Right lobe of liver (tissue), 6 donors: ENCODE measurements at regions of chr19 and their contacts with region 1.

Region 1: GRCh38 chr19:4400135-4400936 is at the start of gene SH3GL1:
- DNase-seq: peak; percentile 92 to 94 (median 94)
- ATAC-seq: peak; percentile 68 to 77 (median 72)
- H3K4me3 ChIP-seq: peak within 1 kb of the TSS; percentile 93 to 100 (median 99)
- H3K27ac ChIP-seq: peak within 1 kb of the TSS; percentile 88 to 97 (median 97)
- H3K4me1 ChIP-seq: peaks cover 0 to 36% (median 13%) of the 10 kb centered on the region in 4 donors
- H3K27me3 ChIP-seq: no peaks in the 10 kb centered on the region
- CTCF ChIP-seq: peak; percentile 92 to 99 (median 96)
- POLR2A ChIP-seq: peak; percentile 94
- total RNA-seq, gene SH3GL1: 22.6 to 47.7 (median 25.2) TPM

Region 2: GRCh38 chr19:4338441-4339001 is 61.8 kb before region 1 on chr19 and contains the start of gene STAP2:
- intact Hi-C with region 1: loop called in 1 of 2 experiments (anchors 10 kb)
- DNase-seq: peak; percentile 77 to 84 (median 78)
- ATAC-seq: peak; percentile 26 to 46 (median 31)
- H3K4me3 ChIP-seq: peak within 1 kb of the TSS; percentile 51 to 67 (median 65)
- H3K27ac ChIP-seq: peak within 1 kb of the TSS; percentile 76 to 94 (median 79)
- H3K4me1 ChIP-seq: peaks cover 0 to 45% (median 15%) of the 10 kb centered on the region in 4 donors
- H3K27me3 ChIP-seq: no peaks in the 10 kb centered on the region
- CTCF ChIP-seq: no peak
- POLR2A ChIP-seq: no peak
- total RNA-seq, gene STAP2: 21.4 to 51.5 (median 43.0) TPM

Region 3: DNA sequence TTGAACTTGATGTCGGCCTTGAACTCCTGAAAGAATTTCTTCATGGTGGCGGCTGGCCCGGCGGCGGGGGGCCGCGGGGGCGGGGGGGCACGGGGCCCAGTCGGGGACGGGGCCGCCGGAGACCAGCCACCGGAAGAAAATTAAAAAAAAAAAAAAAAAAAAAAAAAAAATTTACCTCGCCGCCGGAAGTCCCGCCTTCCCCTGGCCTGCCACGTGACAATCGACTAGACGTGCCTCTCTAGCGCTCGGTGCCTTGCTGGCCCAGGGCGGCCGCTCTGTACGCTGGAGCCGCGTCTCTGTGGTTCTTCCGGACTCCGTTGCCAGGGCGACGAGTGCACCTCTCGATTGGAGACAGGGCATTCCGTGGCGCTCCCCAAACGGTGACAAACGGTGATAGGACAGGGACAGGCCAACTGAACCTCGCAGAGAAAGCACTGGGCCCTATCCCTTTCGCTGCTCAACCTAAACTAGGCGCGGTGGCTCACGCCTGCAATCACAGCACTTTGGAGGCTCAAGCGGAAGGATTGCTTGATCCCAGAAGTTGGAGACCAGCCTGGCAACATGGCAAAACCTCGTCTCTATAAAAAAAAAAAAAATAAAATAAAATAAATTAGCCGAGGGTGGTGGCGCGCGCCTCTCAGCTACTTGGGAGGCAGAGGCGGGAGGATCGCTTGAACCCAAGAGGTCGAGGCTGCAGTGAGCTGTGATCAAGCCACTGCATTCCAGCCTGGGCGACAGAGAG is 57.5 kb after region 1 on chr19 and contains the start of gene UBXN6:
- intact Hi-C with region 1: loop called in 1 of 2 experiments (anchors 10 kb)
- DNase-seq: peak; percentile 98 to 99 (median 99)
- ATAC-seq: peak; percentile 94 to 97 (median 94)
- H3K4me3 ChIP-seq: peak within 1 kb of the TSS; percentile 62 to 66 (median 65)
- H3K27ac ChIP-seq: peak within 1 kb of the TSS; percentile 57 to 73 (median 66)
- H3K4me1 ChIP-seq: peaks cover 0 to 5% (median 0%) of the 10 kb centered on the region in 4 donors
- H3K27me3 ChIP-seq: no peaks in the 10 kb centered on the region
- CTCF ChIP-seq: no peak
- POLR2A ChIP-seq: no peak
- total RNA-seq, gene UBXN6: 47.2 to 79.1 (median 58.8) TPM

Region 4: GRCh38 chr19:4495471-4495870 is 95.1 kb after region 1 on chr19:
- intact Hi-C with region 1: no loop called
- DNase-seq: no peak
- ATAC-seq: peak; percentile 44 to 57 (median 53)
- H3K4me3 ChIP-seq: no peak overlapping the region
- H3K27ac ChIP-seq: no peak overlapping the region
- H3K4me1 ChIP-seq: no peaks in the 10 kb centered on the region
- H3K27me3 ChIP-seq: no peaks in the 10 kb centered on the region
- CTCF ChIP-seq: peak in 3 of 4 donors; percentile 19 to 40 (median 24)
- POLR2A ChIP-seq: no peak